Upper lobe of right lung (tissue), 1 donor: ENCODE measurements at regions of chr4 and their contacts with region 1.

Region 1: DNA sequence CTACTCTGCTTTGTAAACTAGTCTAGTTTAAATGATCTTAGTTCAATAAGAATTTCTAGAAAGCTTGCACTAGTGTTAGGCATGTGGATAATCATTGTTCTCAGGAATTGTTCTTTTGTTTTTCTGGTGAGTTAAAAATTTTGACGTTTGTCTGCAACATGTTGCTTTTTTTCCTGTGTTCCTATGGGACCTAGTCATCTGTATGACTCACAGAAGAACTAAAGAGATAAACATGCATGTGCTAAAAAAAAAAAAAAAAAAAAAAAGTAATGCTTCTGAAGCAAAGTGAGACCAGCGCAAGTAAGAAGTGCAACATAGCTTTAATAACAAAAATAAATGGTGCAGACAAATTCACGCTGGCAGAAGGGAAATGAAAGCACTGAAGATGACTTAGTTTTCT is 471.2 kb downstream of the IQCM start:
- DNase-seq: no peak
- ATAC-seq: no peak
- H3K4me3 ChIP-seq: no peak overlapping the region
- H3K27ac ChIP-seq: no peak overlapping the region
- H3K4me1 ChIP-seq: no peaks in the 10 kb centered on the region
- H3K27me3 ChIP-seq: no peaks in the 10 kb centered on the region
- CTCF ChIP-seq: no peak

Region 2: GRCh38 chr4:149584722-149585121 is 240.3 kb after region 1 on chr4:
- intact Hi-C with region 1: loop called (anchors 10 kb)
- DNase-seq: no peak
- ATAC-seq: peak; percentile 29
- H3K4me3 ChIP-seq: no peak overlapping the region
- H3K27ac ChIP-seq: no peak overlapping the region
- H3K4me1 ChIP-seq: no peaks in the 10 kb centered on the region
- H3K27me3 ChIP-seq: no peaks in the 10 kb centered on the region
- CTCF ChIP-seq: no peak

Region 3: DNA sequence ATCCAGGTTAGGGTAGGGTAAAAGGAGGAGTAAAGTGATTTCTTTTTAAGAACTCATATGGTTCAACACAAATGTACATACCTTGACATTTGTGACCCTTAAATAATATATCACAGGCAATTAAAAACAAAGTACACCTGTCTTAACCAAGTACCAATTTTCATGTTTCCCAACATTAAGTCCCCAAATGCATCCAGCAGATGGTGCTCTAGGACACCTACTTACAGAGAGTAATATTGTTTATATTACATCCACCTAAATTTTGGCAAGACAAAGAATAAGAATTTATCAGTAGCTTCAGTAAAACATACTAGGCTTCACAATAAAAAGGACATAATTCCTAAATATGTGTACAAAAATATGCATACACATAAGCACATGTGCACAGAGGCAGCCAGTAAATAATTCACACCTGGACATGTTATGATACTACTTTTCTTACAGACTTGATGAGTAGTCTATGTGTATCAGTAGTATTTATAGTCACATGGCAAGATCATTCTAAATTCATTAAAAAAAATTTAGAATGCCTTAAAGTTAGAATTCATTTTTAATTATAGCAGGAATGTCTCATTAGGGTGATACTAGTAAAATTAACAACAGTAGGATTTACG is 953.5 kb after region 1 on chr4:
- intact Hi-C with region 1: no loop called
- DNase-seq: no peak
- ATAC-seq: peak; percentile 50
- H3K4me3 ChIP-seq: no peak overlapping the region
- H3K27ac ChIP-seq: no peak overlapping the region
- H3K4me1 ChIP-seq: no peaks in the 10 kb centered on the region
- H3K27me3 ChIP-seq: no peaks in the 10 kb centered on the region
- CTCF ChIP-seq: peak; percentile 65